KBM-7 (cell line): ENCODE measurements at regions of chr22 and their contacts with region 1.

Region 1: GRCh38 chr22:19909350-19910179 is 32.0 kb upstream of the COMT start:
- DNase-seq: peak; percentile 90

Region 2: DNA sequence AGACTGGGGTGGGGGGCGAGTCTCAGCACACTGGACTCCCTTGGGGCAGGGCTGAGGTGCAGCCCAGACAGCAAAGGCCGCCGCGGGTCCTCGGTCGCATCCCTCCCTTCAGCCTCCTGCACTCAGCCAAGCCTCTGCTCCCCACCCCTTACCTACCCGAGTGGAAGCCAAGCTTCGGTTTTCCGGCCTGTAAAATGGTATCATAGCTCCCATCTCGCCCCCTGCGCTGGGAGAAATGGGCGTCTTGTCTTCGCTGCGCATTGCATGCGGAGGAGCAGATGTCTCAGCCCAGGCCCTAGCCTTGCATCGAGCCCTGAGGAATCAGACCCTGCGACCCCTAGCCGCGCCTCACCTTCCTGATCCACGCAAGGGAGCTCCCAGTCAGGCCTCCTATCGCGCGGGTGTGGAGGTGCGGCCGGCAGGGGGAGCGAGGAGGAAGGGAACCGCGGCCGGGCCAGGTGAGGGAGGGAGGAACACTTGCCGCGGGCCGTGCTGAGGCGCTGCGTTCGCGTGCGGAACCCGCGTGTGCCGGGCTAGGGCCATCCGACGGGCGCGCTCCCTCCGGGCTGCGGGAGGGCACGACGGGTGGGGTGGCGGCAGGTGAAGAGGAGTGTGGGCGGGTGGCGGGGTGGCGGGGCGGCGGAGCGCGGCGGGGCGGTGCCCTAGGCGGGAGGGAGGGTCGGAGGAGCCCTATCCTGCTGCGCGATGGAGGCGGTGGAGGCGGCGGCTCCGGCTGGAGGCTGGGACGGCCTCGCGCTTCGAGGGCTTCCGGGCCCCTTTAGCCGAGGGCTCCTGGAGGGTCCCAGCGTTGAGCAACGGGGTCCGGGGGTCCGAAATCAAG is 153.1 kb before region 1 on chr22:
- in situ Hi-C with region 1: loop called (anchors 10 kb)
- DNase-seq: peak; percentile 58

Region 3: DNA sequence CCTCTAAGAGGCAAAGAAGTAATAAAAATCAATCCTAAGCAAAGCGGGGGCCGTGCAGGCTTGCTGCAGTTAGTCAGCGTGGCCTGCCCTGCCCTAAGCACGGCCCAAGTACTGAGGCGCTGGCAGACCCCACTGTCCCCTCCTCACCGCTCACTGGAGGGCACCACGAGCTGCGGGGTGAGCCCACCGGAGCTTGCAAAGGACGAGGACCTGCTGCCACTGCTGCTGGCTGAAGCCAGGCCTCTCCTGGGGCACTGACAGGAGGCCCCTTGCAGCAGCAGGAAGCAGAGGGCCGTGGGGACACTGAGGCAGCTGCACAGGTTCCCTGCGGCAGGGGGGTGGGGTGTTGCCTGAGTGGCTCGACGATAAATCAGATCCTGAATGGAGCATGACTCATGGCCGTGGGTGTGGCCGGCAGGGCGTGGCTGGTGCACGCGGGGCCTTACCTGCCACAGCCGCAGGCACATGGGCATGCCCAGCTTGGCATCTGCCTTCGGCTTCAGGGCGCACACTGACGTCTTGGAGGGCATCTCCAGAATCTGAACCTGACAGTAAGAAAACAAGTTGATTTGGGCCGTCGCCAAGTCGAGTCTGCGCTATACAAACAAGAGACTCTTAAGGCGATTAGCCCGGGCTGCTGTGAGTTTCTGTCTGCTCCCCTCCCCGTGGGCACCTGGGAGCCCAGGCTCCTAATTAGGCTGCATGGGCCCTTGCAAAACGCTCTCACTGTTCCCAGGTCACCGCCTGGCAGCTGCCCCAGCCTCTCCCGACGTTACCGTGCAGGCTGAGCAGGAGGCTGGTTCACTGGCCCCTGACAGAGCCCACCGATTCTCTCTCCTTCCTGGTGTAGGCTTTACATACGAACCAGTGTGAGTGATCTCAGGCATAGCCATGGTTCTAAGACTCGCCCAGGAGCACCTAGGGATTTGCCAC is 103.1 kb before region 1 on chr22:
- in situ Hi-C with region 1: no loop called
- DNase-seq: no peak

Region 4: DNA sequence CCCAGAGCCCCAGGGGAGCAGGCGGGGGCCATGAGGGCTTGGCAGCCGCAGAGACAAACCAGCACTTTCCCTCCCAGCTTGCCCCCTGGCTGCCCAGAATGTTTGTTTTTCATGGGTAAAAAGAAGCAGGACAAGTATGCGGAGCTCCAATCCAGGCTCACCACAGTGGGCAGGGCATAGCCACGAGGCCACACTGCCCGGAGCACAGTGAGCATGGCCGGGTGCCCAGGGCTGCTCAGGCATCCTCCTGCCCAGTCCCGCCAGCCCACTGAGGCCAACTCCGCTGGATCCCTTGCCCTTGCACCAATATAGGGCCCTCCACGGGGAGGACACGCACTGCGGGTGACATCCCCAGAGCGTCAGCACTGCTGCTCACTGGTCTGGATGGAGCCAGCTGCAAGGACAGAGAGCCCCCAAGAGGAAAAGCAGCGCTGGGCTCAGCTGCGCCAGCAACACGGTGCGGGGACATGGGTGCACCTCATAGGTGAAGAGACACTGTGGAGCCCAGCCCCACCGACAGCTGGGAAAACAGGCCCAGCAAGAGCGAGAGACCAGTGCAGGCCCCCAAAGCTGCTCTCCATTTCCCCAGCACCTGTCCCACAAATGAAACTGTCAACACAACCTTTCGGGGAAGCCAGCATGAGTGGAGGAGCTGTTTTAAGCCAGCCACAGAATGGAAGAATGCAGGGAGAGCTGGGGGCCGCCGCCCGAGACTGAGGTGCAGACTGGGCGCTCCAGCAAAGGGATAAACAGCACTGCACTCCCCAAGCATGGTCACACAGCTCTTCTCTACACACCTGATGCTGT is 82.3 kb after region 1 on chr22:
- in situ Hi-C with region 1: no loop called
- DNase-seq: no peak

Region 5: GRCh38 chr22:20016734-20017621 is 107.4 kb after region 1 on chr22 and contains the start of gene ARVCF:
- in situ Hi-C with region 1: loop called (anchors 25 kb)
- DNase-seq: peak; percentile 90